T-cell (primary cell): ENCODE measurements at regions of chr21 and their contacts with region 1.

Region 1: GRCh38 chr21:33332143-33332542 is 7.4 kb downstream of the IFNAR1 start:
- DNase-seq: peak in 1 of 35 experiments; percentile 19
- ATAC-seq: peak; percentile 59 to 77 (median 66)
- H3K4me3 ChIP-seq: no peak overlapping the region
- H3K4me3 Mint-ChIP-seq: peak overlapping the region in 1 of 3 donors; percentile 38
- H3K27ac ChIP-seq: peak overlapping the region; percentile 14
- H3K27ac Mint-ChIP-seq: peak overlapping the region; percentile 66 to 77
- H3K4me1 ChIP-seq: peaks cover 25 to 29% of the 10 kb centered on the region in 2 experiments
- H3K4me1 Mint-ChIP-seq: peaks cover 63 to 72% (median 66%) of the 10 kb centered on the region in 3 donors
- H3K27me3 ChIP-seq: no peaks in the 10 kb centered on the region
- H3K27me3 Mint-ChIP-seq: no peaks in the 10 kb centered on the region

Region 2: DNA sequence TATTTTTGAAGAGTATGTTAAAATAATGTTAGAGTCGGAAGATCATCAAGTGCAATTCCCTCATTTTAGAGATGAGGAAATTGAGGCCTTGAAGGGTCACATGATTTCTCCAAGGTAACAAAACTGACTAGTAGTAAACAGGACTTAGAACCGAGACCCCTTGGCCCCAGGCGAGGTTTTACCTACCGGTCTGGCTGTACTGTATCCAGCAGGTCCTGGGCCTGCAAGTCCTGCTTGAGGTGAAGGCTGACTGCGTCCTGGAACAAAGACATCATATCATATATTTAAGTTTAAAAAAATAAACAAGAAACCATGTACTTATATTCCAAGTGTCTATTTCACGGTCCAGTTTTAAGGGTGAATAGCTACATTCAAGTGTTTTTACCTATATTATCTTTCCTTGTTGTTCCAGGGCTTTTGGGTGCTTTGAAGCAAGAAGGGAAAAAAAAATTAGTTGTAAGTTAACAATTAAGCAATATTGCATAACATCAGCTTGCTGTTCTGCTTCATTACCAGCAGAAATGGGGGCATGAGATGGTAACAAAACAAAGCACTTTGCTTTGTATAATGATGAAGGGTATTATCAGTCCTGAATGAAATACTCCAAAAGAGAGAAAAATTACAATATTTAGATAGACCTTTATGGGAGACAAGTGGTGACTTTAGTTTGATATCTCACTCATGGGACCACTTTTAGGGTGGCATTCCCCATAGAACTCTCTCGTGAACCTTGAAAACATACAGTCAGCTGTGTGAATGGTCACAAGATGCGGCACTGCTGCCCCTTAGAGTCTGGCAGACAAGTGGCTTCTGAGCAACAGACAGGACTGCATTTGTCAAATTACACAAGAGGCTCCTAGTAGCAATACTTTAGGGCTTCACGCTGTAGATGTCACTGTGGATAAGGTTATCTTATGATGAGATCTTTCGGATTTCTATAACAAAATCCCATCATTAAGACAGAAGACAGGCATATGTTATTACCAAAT is 690.1 kb before region 1 on chr21:
- CTCF ChIA-PET with region 1: interaction called in 1 of 2 experiments, 10 read pairs
- POLR2A ChIA-PET with region 1: no interaction called
- DNase-seq: no peak
- ATAC-seq: no peak
- H3K4me3 ChIP-seq: no peak overlapping the region
- H3K4me3 Mint-ChIP-seq: no peak overlapping the region
- H3K27ac ChIP-seq: no peak overlapping the region
- H3K27ac Mint-ChIP-seq: no peak overlapping the region
- H3K4me1 ChIP-seq: no peaks in the 10 kb centered on the region
- H3K4me1 Mint-ChIP-seq: no peaks in the 10 kb centered on the region
- H3K27me3 ChIP-seq: no peaks in the 10 kb centered on the region
- H3K27me3 Mint-ChIP-seq: no peaks in the 10 kb centered on the region

Region 3: DNA sequence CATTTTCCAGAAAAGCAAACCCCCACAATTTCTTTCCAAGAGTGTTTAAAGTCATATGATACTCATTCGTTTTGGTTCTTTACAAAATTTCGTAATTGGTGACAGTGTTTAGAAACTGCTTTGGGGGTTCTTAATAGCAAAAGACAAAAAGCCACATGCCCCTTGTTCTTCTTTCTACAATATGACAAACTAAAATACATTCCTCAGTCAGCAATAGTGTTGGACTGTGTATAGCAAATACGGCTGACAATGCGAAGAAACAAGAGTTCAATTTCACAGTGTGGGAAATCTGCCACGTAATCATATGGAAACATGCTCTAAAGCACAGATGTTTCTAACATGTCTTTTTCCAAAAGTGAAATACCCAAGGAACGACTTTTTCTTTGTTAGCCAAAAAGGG is 15.0 kb before region 1 on chr21:
- CTCF ChIA-PET with region 1: no interaction called
- POLR2A ChIA-PET with region 1: interaction called in 1 of 2 experiments, 15 read pairs
- DNase-seq: no peak
- ATAC-seq: no peak
- H3K4me3 ChIP-seq: no peak overlapping the region
- H3K4me3 Mint-ChIP-seq: no peak overlapping the region
- H3K27ac ChIP-seq: no peak overlapping the region
- H3K27ac Mint-ChIP-seq: no peak overlapping the region
- H3K4me1 ChIP-seq: no peaks in the 10 kb centered on the region
- H3K4me1 Mint-ChIP-seq: no peaks in the 10 kb centered on the region
- H3K27me3 ChIP-seq: no peaks in the 10 kb centered on the region
- H3K27me3 Mint-ChIP-seq: no peaks in the 10 kb centered on the region